ENCODE measurements at regions of chr11 and their contacts with region 1.

Region 1: GRCh38 chr11:122215244-122215992 is 99.4 kb upstream of the BLID start:
- DNase-seq: no peak
- ATAC-seq: peak; percentile 97
- H3K4me3 ChIP-seq: no peak overlapping the region
- H3K27ac ChIP-seq: no peak overlapping the region
- H3K4me1 ChIP-seq: no peaks in the 10 kb centered on the region
- H3K27me3 ChIP-seq: no peaks in the 10 kb centered on the region
- CTCF ChIP-seq: peak; percentile 82 to 94 (median 89)
- EP300 ChIP-seq: no peak
- POLR2A ChIP-seq: no peak
- RAD21 ChIP-seq: peak; percentile 46

Region 2: DNA sequence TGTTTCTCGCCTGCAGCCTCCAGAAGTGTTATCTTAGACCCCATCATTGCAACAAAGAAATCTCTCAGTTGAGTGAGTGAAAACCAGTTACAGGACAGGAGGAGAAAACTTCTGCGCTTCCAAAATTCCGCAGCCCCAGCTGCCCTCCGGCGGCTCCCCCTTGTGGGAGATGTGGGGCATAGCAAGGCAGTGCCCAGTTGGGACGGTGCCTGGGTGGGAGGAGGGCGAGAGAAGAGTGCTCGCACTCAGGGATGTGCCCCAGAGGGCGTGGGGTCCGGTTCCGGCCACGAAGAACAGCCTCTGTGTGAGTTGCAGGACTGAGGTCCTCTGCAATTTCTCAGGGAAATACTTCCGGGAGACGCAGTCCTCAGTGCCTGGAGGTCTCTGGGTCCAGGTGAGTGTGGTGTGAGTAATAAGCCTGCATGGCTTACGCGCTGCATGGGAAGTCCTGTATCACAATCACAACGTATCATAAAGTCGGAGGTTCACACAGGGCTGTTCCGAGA is 12.4 kb before region 1 on chr11:
- CTCF ChIA-PET with region 1: interaction called, 32 read pairs
- POLR2A ChIA-PET with region 1: interaction called, 3 read pairs
- RAD21 ChIA-PET with region 1: no interaction called
- SMC1A ChIA-PET with region 1: no interaction called
- in situ Hi-C with region 1: no loop called
- intact Hi-C with region 1: no loop called
- DNase-seq: no peak
- ATAC-seq: peak; percentile 96
- H3K4me3 ChIP-seq: no peak overlapping the region
- H3K27ac ChIP-seq: no peak overlapping the region
- H3K4me1 ChIP-seq: no peaks in the 10 kb centered on the region
- H3K27me3 ChIP-seq: peaks cover 3 to 8% of the 10 kb centered on the region in 2 experiments
- CTCF ChIP-seq: peak; percentile 86 to 95 (median 93)
- EP300 ChIP-seq: no peak
- POLR2A ChIP-seq: no peak
- RAD21 ChIP-seq: peak; percentile 85

Region 3: DNA sequence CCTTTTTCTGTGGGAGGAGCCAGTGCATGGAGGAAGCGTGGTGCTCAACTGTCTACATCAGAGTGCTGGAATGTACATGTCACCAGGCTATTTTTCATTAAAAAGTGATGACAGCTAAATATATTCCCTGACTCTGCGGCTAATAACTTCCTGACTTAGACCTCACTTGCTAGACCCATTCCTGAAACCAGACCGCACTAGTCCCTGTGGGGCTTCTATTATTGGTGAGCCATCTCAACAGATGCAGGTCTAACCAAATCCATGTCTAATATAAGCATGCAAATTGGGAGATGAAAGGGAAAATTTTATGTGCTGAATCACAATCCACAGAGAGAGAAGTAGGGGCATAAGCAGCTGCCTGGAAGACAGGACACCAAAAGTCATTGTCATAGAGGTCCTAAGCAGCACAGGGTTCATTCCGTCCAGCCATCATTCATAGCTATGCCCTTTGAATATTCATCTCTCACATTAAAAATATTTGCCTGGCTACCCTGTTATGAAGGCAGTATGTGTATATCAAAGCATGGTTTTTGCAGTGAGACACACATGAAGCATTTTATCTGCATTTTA is 11.5 kb after region 1 on chr11:
- CTCF ChIA-PET with region 1: interaction called, 22 read pairs
- POLR2A ChIA-PET with region 1: no interaction called
- RAD21 ChIA-PET with region 1: no interaction called
- SMC1A ChIA-PET with region 1: no interaction called
- in situ Hi-C with region 1: no loop called
- intact Hi-C with region 1: no loop called
- DNase-seq: no peak
- ATAC-seq: no peak
- H3K4me3 ChIP-seq: no peak overlapping the region
- H3K27ac ChIP-seq: no peak overlapping the region
- H3K4me1 ChIP-seq: no peaks in the 10 kb centered on the region
- H3K27me3 ChIP-seq: 0 out of 4 replicates have a peak, but pooled peaks cover 0 to 4% of the 10 kb centered on the region in 2 experiments
- CTCF ChIP-seq: no peak
- EP300 ChIP-seq: no peak
- POLR2A ChIP-seq: no peak
- RAD21 ChIP-seq: no peak

Region 4: GRCh38 chr11:122505304-122506006 is 290.0 kb after region 1 on chr11:
- CTCF ChIA-PET with region 1: interaction called, 33 read pairs
- POLR2A ChIA-PET with region 1: no interaction called
- RAD21 ChIA-PET with region 1: interaction called, 14 read pairs
- SMC1A ChIA-PET with region 1: interaction called, 18 read pairs
- in situ Hi-C with region 1: loop called (anchors 5 kb)
- intact Hi-C with region 1: loop called (anchors 1 kb)
- DNase-seq: peak; percentile 7
- ATAC-seq: peak; percentile 97
- H3K4me3 ChIP-seq: no peak overlapping the region
- H3K27ac ChIP-seq: no peak overlapping the region
- H3K4me1 ChIP-seq: no peaks in the 10 kb centered on the region
- H3K27me3 ChIP-seq: no peaks in the 10 kb centered on the region
- CTCF ChIP-seq: peak; percentile 78 to 88 (median 84)
- EP300 ChIP-seq: no peak
- POLR2A ChIP-seq: no peak
- RAD21 ChIP-seq: peak; percentile 81

Measured in GM12878 (cell line).